Activated CD4-positive, alpha-beta T cell treated with anti-CD3 and anti-CD28 coated beads, Interleukin-2, amount 10 ng/mL, durations not matched to agents 24 days and 14 days (primary cell): ENCODE measurements at regions of chr18 and their contacts with region 1.

Region 1: DNA sequence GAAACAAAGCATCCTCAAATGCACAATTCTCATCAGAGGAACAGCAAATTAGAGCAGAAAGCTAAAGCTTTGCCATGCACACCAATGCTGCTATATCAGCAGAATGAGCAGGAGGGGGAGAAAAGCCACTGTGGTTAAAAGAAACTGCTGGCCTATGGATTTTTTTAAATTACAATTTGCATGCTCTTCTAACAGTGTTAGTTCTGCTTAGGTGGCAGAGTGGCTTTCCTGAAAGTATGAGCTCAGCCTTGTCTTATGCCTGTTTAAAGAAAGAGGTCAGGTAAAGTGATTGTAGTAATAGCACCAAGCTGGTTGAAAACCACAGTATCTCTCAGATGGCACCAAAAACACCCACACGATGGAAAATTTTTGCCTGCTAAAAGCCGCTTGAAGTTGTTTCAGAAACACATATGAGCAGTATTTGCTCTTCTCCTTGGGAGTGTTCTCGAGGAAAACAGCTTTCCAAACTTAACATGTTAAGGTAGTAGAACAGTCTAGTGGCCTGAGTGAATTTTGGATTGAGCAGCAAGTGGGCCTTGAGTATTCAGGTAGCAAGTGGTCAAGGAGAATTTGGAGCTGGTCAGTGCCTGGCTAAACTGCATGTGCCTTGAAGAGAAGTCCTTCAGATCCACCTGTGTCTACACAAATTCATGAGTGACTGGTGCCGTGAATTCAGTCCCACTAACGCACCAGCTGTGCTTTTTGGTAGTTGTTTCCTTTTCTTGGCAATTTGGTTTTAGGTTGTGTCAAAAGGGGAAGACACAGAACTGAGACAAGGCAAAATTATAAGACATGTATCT is 19.6 kb upstream of the NDUFV2 start:
- DNase-seq: peak; percentile 86
- H3K4me3 Mint-ChIP-seq: peak overlapping the region; percentile 73
- H3K27ac Mint-ChIP-seq: peak overlapping the region; percentile 97
- H3K4me1 Mint-ChIP-seq: peaks cover 40% of the 10 kb centered on the region
- H3K27me3 Mint-ChIP-seq: no peaks in the 10 kb centered on the region

Region 2: GRCh38 chr18:8706764-8707555 is 376.0 kb before region 1 on chr18:
- intact Hi-C with region 1: no loop called
- DNase-seq: peak; percentile 67
- H3K4me3 Mint-ChIP-seq: peak overlapping the region; percentile 85
- H3K27ac Mint-ChIP-seq: peak overlapping the region; percentile 84
- H3K4me1 Mint-ChIP-seq: peaks cover 9% of the 10 kb centered on the region
- H3K27me3 Mint-ChIP-seq: peaks cover 60% of the 10 kb centered on the region

Region 3: GRCh38 chr18:9095297-9096006 is 12.5 kb after region 1 on chr18:
- intact Hi-C with region 1: loop called (anchors 1 kb)
- DNase-seq: peak; percentile 89
- H3K4me3 Mint-ChIP-seq: peak overlapping the region; percentile 77
- H3K27ac Mint-ChIP-seq: peak overlapping the region; percentile 98
- H3K4me1 Mint-ChIP-seq: peaks cover 67% of the 10 kb centered on the region
- H3K27me3 Mint-ChIP-seq: no peaks in the 10 kb centered on the region

Region 4: GRCh38 chr18:9102508-9103375 is 19.8 kb after region 1 on chr18 and contains the start of gene NDUFV2:
- intact Hi-C with region 1: loop called (anchors 1 kb)
- DNase-seq: peak; percentile 100
- H3K4me3 Mint-ChIP-seq: peak within 1 kb of the TSS; percentile 95
- H3K27ac Mint-ChIP-seq: peak within 1 kb of the TSS; percentile 98
- H3K4me1 Mint-ChIP-seq: peaks cover 54% of the 10 kb centered on the region
- H3K27me3 Mint-ChIP-seq: no peaks in the 10 kb centered on the region
- total RNA-seq, gene NDUFV2: 357 and 360 TPM in 2 replicates

Region 5: GRCh38 chr18:9136315-9137155 is 53.6 kb after region 1 on chr18 and contains the start of gene ANKRD12:
- intact Hi-C with region 1: loop called (anchors 1 kb)
- DNase-seq: peak; percentile 100
- H3K4me3 Mint-ChIP-seq: peak within 1 kb of the TSS; percentile 94
- H3K27ac Mint-ChIP-seq: peak within 1 kb of the TSS; percentile 99
- H3K4me1 Mint-ChIP-seq: peaks cover 54% of the 10 kb centered on the region
- H3K27me3 Mint-ChIP-seq: no peaks in the 10 kb centered on the region
- total RNA-seq, gene ANKRD12: 60.8 TPM in 2 replicates

Region 6: DNA sequence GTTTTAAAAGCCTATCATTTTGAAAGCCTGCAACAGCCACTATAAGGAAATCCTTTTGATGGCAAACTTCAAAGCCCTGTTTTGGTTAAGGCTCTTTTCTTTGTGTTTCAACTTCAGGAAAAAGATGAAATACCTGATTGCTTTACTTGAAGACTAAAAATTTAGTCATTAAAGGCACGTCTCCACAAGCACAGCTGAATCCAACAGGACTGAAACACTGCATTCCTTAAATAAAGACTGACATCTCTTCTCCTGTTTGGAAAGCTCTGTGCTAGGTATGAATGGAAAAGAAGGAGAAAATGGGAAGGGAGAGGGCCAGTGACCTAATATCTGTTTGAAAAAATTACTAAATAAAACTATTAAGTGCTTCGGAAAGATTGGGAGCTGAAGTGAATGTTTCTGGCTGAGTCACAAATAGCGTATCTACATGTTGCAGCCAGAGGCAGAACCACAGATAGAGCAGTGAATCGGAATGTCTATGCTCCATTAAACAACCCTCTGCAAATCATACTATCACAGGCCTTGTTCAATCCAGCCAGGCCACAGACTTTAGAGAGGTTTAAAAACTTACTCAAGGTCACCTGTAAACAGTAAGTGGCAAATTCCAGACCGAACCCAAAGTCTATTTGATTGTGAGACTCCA is 371.3 kb after region 1 on chr18:
- intact Hi-C with region 1: no loop called
- DNase-seq: no peak
- H3K4me3 Mint-ChIP-seq: no peak overlapping the region
- H3K27ac Mint-ChIP-seq: no peak overlapping the region
- H3K4me1 Mint-ChIP-seq: no peaks in the 10 kb centered on the region
- H3K27me3 Mint-ChIP-seq: peaks cover 2% of the 10 kb centered on the region